Ovary (tissue), 10 donors: ENCODE measurements at regions of chr7 and their contacts with region 1.

Region 1: DNA sequence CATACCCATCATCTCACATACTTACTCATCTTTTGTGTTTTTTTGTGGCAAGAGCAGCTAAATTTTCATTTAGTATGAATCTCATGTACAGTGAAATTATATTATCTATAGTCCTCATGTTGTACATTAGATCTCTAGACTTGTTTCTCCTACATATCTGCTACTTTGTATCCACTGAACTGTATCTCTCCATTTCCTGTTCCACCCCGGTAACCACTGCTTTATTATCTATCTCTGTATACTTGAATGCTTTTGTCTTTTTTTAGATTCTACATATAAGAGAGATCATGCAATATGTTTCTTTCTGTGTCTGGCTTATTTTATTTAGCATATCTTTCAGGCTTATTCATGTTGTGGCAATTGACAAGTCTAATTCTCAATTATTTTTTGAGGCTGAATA is 125.1 kb downstream of the ANKRD7 start:
- DNase-seq: no peak
- H3K4me3 ChIP-seq: no peak overlapping the region
- H3K27ac ChIP-seq: no peak overlapping the region
- H3K4me1 ChIP-seq: no peaks in the 10 kb centered on the region
- H3K27me3 ChIP-seq: no peaks in the 10 kb centered on the region
- CTCF ChIP-seq: no peak
- EP300 ChIP-seq: no peak
- POLR2A ChIP-seq: no peak

Region 2: DNA sequence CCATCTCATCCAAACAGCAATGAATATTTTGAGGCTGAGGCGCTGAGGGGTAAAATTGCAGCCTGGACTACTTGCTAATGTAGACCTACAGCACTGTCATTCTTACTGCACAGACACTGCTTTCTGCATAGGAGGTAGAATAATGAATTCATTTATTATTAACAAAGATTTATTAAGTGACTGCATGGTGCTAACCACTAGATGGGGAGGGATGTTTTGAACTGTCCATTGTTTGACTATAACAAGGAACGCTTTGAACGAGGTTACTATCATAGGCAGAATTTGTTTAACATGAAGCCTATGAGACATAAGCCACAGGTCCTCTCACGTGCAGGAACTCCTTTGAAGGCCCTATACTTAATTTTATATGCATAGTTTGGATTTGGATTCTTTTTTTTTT is 726.0 kb before region 1 on chr7:
- intact Hi-C with region 1: no loop called
- DNase-seq: no peak
- H3K4me3 ChIP-seq: no peak overlapping the region
- H3K27ac ChIP-seq: no peak overlapping the region
- H3K4me1 ChIP-seq: no peaks in the 10 kb centered on the region
- H3K27me3 ChIP-seq: no peaks in the 10 kb centered on the region
- CTCF ChIP-seq: no peak
- EP300 ChIP-seq: no peak
- POLR2A ChIP-seq: no peak

Region 3: DNA sequence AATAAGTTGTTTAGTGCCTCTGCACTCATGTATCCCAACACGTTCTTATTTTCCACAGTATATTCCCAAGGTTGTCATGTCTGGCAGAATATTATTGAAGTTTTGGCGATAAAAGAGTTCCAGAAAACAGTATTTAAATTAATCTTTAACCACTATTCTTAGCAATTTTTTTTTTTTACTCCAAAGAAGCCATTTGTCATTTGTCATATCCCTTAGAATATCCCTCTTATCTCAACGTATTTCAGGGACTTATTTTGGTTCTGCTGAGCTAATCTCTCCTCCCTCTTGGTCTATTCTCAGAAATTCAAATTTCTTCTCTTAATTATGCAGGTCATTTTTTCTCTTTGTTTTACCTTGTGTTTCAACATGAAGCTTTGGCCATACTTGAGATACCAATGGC is 518.3 kb after region 1 on chr7:
- intact Hi-C with region 1: loop called in 1 of 4 experiments (anchors 5 kb)
- DNase-seq: no peak
- H3K4me3 ChIP-seq: no peak overlapping the region
- H3K27ac ChIP-seq: no peak overlapping the region
- H3K4me1 ChIP-seq: no peaks in the 10 kb centered on the region
- H3K27me3 ChIP-seq: no peaks in the 10 kb centered on the region
- CTCF ChIP-seq: no peak
- EP300 ChIP-seq: no peak
- POLR2A ChIP-seq: no peak